Prostate gland (tissue), 2 donors: ENCODE measurements at regions of chr3 and their contacts with region 1.

Region 1: DNA sequence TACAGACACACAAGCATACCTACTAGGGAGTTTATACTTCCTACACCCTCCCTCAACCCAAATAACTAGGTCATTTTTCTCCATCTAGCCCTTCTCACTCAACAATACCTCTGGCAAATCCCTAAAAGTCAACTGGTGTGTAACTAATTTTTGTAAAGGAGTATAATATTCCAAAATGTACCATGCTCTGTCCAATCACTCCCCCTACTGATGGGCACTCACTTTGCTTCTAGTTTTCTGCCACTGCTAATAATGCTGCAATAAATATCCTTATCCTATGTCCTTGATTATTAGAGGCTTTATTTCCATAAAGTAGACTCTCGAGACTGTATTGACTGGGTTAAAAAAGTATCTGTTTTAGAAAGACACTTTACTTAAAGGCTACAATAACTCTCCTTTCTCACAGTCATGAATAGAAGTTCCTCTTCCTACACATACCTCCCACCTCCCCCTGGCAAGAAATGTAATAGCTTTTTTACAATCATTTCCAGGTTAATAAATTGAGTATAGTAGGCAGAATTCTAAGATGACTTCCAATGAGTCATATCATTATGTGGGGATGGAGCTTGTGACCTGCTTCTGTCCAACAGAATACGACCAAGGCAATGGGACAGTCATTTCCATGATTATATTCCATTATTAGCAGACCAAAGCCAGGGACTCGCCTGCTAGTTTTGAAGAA is 30.0 kb downstream of the SHQ1 start:
- DNase-seq: peak; percentile 10
- H3K4me3 ChIP-seq: no peak overlapping the region
- H3K27ac ChIP-seq: no peak overlapping the region
- H3K4me1 ChIP-seq: peaks cover 7% of the 10 kb centered on the region
- H3K27me3 ChIP-seq: no peaks in the 10 kb centered on the region
- CTCF ChIP-seq: peak in 3 of 4 experiments; percentile 20 to 79 (median 79)
- POLR2A ChIP-seq: no peak

Region 2: DNA sequence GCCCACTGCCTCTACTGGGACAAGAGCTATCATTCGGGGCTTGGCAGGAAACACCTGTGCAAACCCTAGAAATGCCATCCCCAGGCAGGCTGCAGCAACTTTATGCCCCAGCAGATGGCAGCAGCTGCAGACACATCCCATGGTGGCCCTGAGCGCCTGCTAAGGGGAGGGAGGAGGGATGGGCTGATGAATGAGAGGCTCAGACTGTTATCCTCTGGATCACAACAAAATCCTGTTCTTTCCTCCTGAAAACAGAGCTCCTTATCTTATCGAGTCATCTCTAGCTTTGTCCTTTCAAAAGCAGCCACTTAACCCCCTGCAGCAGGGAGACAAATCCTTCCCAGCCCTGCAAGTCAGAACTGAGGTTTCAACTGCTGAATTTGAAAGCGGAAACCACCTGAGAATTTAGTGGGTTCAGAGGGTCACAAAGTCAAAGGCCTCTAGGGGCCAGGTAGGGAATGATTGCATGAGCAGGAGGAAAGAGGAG is 942.7 kb before region 1 on chr3:
- intact Hi-C with region 1: loop called (anchors 1 kb)
- DNase-seq: peak; percentile 69
- H3K4me3 ChIP-seq: no peak overlapping the region
- H3K27ac ChIP-seq: no peak overlapping the region
- H3K4me1 ChIP-seq: peaks cover 3% of the 10 kb centered on the region
- H3K27me3 ChIP-seq: no peaks in the 10 kb centered on the region
- CTCF ChIP-seq: peak in 3 of 4 experiments; percentile 72 to 84 (median 79)
- POLR2A ChIP-seq: no peak

Region 3: GRCh38 chr3:72041511-72041910 is 776.7 kb before region 1 on chr3:
- intact Hi-C with region 1: loop called (anchors 2 kb)
- DNase-seq: peak; percentile 25
- H3K4me3 ChIP-seq: no peak overlapping the region
- H3K27ac ChIP-seq: no peak overlapping the region
- H3K4me1 ChIP-seq: no peaks in the 10 kb centered on the region
- H3K27me3 ChIP-seq: no peaks in the 10 kb centered on the region
- CTCF ChIP-seq: peak in 1 of 4 experiments; percentile 38
- POLR2A ChIP-seq: no peak

Region 4: GRCh38 chr3:72447059-72447946 is 370.9 kb before region 1 on chr3:
- intact Hi-C with region 1: loop called (anchors 10 kb)
- DNase-seq: peak; percentile 92
- H3K4me3 ChIP-seq: peak overlapping the region; percentile 82 to 90
- H3K27ac ChIP-seq: peak overlapping the region; percentile 93 to 94
- H3K4me1 ChIP-seq: no peaks in the 10 kb centered on the region
- H3K27me3 ChIP-seq: no peaks in the 10 kb centered on the region
- CTCF ChIP-seq: peak in 1 of 4 experiments; percentile 29
- POLR2A ChIP-seq: no peak

Region 5: DNA sequence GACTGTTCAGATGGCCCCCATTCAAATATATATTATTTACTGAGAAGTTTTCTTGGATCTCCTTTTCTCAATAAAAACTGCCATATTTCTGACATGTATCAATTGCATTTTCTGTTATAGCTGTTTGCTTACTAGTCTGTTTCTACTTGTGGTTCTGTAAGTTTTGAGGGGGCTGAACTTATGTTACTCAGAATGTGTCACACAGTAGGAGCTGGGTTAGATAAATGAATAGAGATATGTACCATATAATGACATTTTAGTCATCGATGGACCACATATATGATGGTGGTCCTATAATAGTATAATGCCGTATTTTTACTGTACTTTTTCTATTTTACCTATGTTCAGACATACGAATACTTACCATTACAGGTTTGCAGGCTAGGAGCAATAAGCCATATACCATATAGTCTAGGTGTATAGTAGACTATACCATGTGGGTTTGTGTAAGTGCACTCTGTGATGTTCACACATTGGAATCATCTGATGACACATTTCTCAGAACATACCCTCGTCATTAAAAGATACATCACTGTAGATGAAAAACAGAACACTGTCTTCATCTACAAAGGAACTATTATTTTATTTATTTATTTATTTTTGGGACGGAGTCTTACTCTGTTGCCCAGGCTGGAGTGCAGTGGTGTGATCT is 200.7 kb after region 1 on chr3:
- intact Hi-C with region 1: no loop called
- DNase-seq: no peak
- H3K4me3 ChIP-seq: no peak overlapping the region
- H3K27ac ChIP-seq: no peak overlapping the region
- H3K4me1 ChIP-seq: no peaks in the 10 kb centered on the region
- H3K27me3 ChIP-seq: no peaks in the 10 kb centered on the region
- CTCF ChIP-seq: no peak
- POLR2A ChIP-seq: no peak